ENCODE measurements at regions of chr3 and their contacts with region 1.

Region 1: GRCh38 chr3:45656575-45657363 is 32.4 kb upstream of the SACM1L start:
- DNase-seq: peak; percentile 78 to 87 (median 80)
- H3K4me3 ChIP-seq: no peak overlapping the region
- H3K4me3 Mint-ChIP-seq: no peak overlapping the region
- H3K27ac ChIP-seq: no peak overlapping the region
- H3K27ac Mint-ChIP-seq: peak overlapping the region in 2 of 7 donors; percentile 23 to 61
- H3K4me1 ChIP-seq: peaks cover 6% of the 10 kb centered on the region
- H3K4me1 Mint-ChIP-seq: peaks cover 13 to 23% (median 16%) of the 10 kb centered on the region in 4 donors
- H3K27me3 ChIP-seq: no peaks in the 10 kb centered on the region
- H3K27me3 Mint-ChIP-seq: no peaks in the 10 kb centered on the region

Region 2: GRCh38 chr3:45043728-45044299 is 613.0 kb before region 1 on chr3:
- CTCF ChIA-PET with region 1: interaction called, 80 read pairs
- POLR2A ChIA-PET with region 1: no interaction called
- intact Hi-C with region 1: no loop called
- DNase-seq: no peak
- H3K4me3 ChIP-seq: no peak overlapping the region
- H3K4me3 Mint-ChIP-seq: no peak overlapping the region
- H3K27ac ChIP-seq: no peak overlapping the region
- H3K27ac Mint-ChIP-seq: no peak overlapping the region
- H3K4me1 ChIP-seq: peaks cover 14% of the 10 kb centered on the region
- H3K4me1 Mint-ChIP-seq: peaks cover 5 to 23% (median 13%) of the 10 kb centered on the region in 4 donors
- H3K27me3 ChIP-seq: no peaks in the 10 kb centered on the region
- H3K27me3 Mint-ChIP-seq: peaks cover 2 to 7% of the 10 kb centered on the region in 2 donors

Region 3: GRCh38 chr3:45414823-45415222 is 241.9 kb before region 1 on chr3:
- CTCF ChIA-PET with region 1: no interaction called
- POLR2A ChIA-PET with region 1: no interaction called
- intact Hi-C with region 1: no loop called
- DNase-seq: no peak
- H3K4me3 ChIP-seq: no peak overlapping the region
- H3K4me3 Mint-ChIP-seq: no peak overlapping the region
- H3K27ac ChIP-seq: no peak overlapping the region
- H3K27ac Mint-ChIP-seq: peak overlapping the region in 1 of 7 donors; percentile 56
- H3K4me1 ChIP-seq: no peaks in the 10 kb centered on the region
- H3K4me1 Mint-ChIP-seq: peaks cover 0 to 2% (median 0%) of the 10 kb centered on the region in 4 donors
- H3K27me3 ChIP-seq: no peaks in the 10 kb centered on the region
- H3K27me3 Mint-ChIP-seq: no peaks in the 10 kb centered on the region

Region 4: GRCh38 chr3:45546716-45547701 is 109.8 kb before region 1 on chr3:
- CTCF ChIA-PET with region 1: interaction called, 11 read pairs
- POLR2A ChIA-PET with region 1: no interaction called
- intact Hi-C with region 1: no loop called
- DNase-seq: peak in 2 of 5 donors; percentile 4 to 8
- H3K4me3 ChIP-seq: no peak overlapping the region
- H3K4me3 Mint-ChIP-seq: no peak overlapping the region
- H3K27ac ChIP-seq: no peak overlapping the region
- H3K27ac Mint-ChIP-seq: no peak overlapping the region
- H3K4me1 ChIP-seq: no peaks in the 10 kb centered on the region
- H3K4me1 Mint-ChIP-seq: peaks cover 0 to 2% (median 0%) of the 10 kb centered on the region in 4 donors
- H3K27me3 ChIP-seq: no peaks in the 10 kb centered on the region
- H3K27me3 Mint-ChIP-seq: no peaks in the 10 kb centered on the region

Region 5: GRCh38 chr3:45610119-45610518 is 46.6 kb before region 1 on chr3:
- CTCF ChIA-PET with region 1: interaction called, 11 read pairs
- POLR2A ChIA-PET with region 1: no interaction called
- intact Hi-C with region 1: no loop called
- DNase-seq: no peak
- H3K4me3 ChIP-seq: no peak overlapping the region
- H3K4me3 Mint-ChIP-seq: no peak overlapping the region
- H3K27ac ChIP-seq: no peak overlapping the region
- H3K27ac Mint-ChIP-seq: no peak overlapping the region
- H3K4me1 ChIP-seq: peaks cover 13% of the 10 kb centered on the region
- H3K4me1 Mint-ChIP-seq: peaks cover 16 to 63% (median 34%) of the 10 kb centered on the region in 4 donors
- H3K27me3 ChIP-seq: no peaks in the 10 kb centered on the region
- H3K27me3 Mint-ChIP-seq: no peaks in the 10 kb centered on the region

Region 6: DNA sequence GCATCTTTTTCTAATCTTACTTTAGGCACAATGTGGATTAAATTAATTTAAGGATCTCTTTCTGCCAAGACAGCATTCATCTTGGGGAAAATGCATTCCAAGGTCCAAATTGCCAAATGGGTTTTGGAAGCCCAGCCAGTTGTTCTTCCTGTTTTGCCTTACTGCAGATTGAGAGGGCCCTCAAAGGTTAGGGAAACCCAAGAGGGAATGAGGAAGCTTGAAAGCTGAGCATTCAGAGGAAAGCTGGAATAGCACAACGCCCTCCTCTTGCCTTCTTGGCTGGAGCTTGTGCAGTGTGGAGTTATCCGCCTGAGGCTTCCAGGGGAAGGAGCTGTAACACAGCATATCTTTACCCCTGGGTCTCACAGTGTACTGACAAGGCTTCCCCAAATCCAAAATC is 14.2 kb after region 1 on chr3:
- CTCF ChIA-PET with region 1: interaction called, 43 read pairs
- POLR2A ChIA-PET with region 1: interaction called, 4 read pairs
- intact Hi-C with region 1: no loop called
- DNase-seq: no peak
- H3K4me3 ChIP-seq: no peak overlapping the region
- H3K4me3 Mint-ChIP-seq: no peak overlapping the region
- H3K27ac ChIP-seq: no peak overlapping the region
- H3K27ac Mint-ChIP-seq: no peak overlapping the region
- H3K4me1 ChIP-seq: peaks cover 4% of the 10 kb centered on the region
- H3K4me1 Mint-ChIP-seq: peaks cover 1 to 15% (median 8%) of the 10 kb centered on the region in 4 donors
- H3K27me3 ChIP-seq: no peaks in the 10 kb centered on the region
- H3K27me3 Mint-ChIP-seq: no peaks in the 10 kb centered on the region

Region 7: GRCh38 chr3:45701172-45701867 is 44.6 kb after region 1 on chr3:
- CTCF ChIA-PET with region 1: interaction called, 19 read pairs
- POLR2A ChIA-PET with region 1: no interaction called
- intact Hi-C with region 1: no loop called
- DNase-seq: no peak
- H3K4me3 ChIP-seq: no peak overlapping the region
- H3K4me3 Mint-ChIP-seq: peak overlapping the region in 1 of 8 donors; percentile 41
- H3K27ac ChIP-seq: no peak overlapping the region
- H3K27ac Mint-ChIP-seq: peak overlapping the region in 4 of 7 donors; percentile 19 to 58 (median 44)
- H3K4me1 ChIP-seq: peaks cover 56% of the 10 kb centered on the region
- H3K4me1 Mint-ChIP-seq: peaks cover 36 to 76% (median 57%) of the 10 kb centered on the region in 4 donors
- H3K27me3 ChIP-seq: no peaks in the 10 kb centered on the region
- H3K27me3 Mint-ChIP-seq: no peaks in the 10 kb centered on the region

Measured in CD4-positive, alpha-beta memory T cell (primary cell).